Transverse colon (tissue), 4 donors: ENCODE measurements at regions of chr17 and their contacts with region 1.

Region 1: GRCh38 chr17:79839363-79840268 is at the start of gene CBX4:
- DNase-seq: peak; percentile 97
- H3K4me3 ChIP-seq: peak within 1 kb of the TSS; percentile 63 to 92 (median 74)
- H3K27ac ChIP-seq: peak within 1 kb of the TSS; percentile 98 to 99 (median 98)
- H3K4me1 ChIP-seq: peaks cover 43 to 81% (median 70%) of the 10 kb centered on the region in 4 donors
- H3K27me3 ChIP-seq: peaks cover 43% of the 10 kb centered on the region
- CTCF ChIP-seq: peak; percentile 69 to 96 (median 80)
- EP300 ChIP-seq: no peak
- POLR2A ChIP-seq: peak; percentile 74
- total RNA-seq, gene CBX4: 6.6 to 25.1 (median 8.3) TPM

Region 2: DNA sequence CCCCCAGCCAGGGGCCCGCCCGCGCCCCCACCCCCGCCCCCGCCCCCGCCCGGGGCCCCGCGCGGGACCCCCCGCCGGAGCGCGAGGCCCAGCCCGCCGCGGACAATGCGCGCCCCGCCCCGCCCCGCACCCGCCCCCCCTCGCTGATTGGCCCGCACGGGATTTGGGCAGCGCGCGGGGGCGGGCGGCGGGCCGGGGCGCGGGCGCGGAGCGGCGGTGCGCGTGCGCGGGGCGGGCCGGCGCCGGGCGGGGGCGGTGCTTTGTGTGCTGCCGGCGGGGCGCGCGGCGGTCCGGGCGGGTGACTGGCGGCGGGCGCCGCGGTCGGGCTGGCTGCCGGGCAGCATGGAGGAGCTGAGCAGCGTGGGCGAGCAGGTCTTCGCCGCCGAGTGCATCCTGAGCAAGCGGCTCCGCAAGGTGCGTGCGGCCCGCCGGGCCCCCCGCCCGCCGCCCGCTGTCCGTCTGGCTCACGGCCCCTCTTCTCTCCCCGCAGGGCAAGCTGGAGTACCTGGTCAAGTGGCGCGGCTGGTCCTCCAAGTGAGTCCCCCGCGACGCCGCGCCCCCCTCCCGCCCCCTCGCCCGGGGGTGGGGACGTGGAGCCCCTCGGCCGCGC is 61.6 kb before region 1 on chr17 and contains the start of gene CBX2:
- in situ Hi-C with region 1: no loop called
- intact Hi-C with region 1: no loop called
- DNase-seq: peak; percentile 83
- H3K4me3 ChIP-seq: peak within 1 kb of the TSS; percentile 40 to 70 (median 52)
- H3K27ac ChIP-seq: peak within 1 kb of the TSS in 1 of 4 donors; percentile 44
- H3K4me1 ChIP-seq: peaks cover 4 to 25% (median 21%) of the 10 kb centered on the region in 4 donors
- H3K27me3 ChIP-seq: peaks cover 95% of the 10 kb centered on the region
- CTCF ChIP-seq: no peak
- EP300 ChIP-seq: no peak
- POLR2A ChIP-seq: no peak
- total RNA-seq, gene CBX2: 0.27 to 0.64 TPM in 2 of 4 donors, not detected in the others

Region 3: DNA sequence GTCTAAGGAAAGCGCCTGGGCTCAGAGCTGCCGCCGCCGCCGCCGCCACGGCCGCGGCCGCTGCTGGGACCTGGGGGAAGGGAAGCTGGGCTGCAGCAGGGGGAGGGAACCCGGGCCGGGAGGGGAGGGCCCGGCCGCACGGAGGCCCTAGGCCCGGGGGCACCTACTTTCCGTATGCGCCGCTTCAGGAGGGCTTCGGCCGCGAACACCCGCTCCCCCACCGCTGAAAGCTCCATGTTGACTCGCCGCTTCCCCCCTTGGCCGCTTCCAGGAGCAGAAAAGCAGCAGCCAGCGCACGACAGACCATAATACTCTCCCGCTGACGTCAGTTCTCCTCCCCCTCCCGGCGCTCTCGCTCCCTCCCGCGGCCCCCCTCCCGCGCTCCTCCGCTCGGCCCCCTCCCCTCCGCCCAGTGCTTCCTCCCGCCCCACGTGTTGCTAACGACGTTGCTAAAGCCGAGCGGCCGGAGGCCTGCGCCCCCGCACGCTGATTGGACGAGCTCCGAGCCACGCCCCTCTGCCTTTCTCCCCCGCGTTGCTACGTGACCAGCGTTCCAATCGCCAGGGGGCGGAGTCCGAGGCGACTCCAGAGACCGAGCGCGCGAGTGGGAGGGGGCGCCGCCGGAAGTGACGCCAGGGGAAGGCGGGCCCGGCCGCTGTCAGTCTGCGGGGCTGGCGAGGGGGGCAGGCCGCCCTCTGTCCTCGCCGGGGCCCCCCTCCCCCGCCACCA is 42.7 kb before region 1 on chr17 and contains the start of gene CBX8:
- in situ Hi-C with region 1: no loop called
- intact Hi-C with region 1: loop called (anchors 5 kb)
- DNase-seq: peak; percentile 100
- H3K4me3 ChIP-seq: peak within 1 kb of the TSS; percentile 64 to 80 (median 78)
- H3K27ac ChIP-seq: peak within 1 kb of the TSS; percentile 85 to 88 (median 86)
- H3K4me1 ChIP-seq: peaks cover 18 to 63% (median 53%) of the 10 kb centered on the region in 4 donors
- H3K27me3 ChIP-seq: peaks cover 66% of the 10 kb centered on the region
- CTCF ChIP-seq: no peak
- EP300 ChIP-seq: peak; percentile 11
- POLR2A ChIP-seq: peak; percentile 26
- total RNA-seq, gene CBX8: 1.5 to 4.4 (median 3.1) TPM